ENCODE measurements at regions of chr2 and their contacts with region 1.

Region 1: GRCh38 chr2:197107221-197108041 is 180.9 kb upstream of the PGAP1 start:
- DNase-seq: peak; percentile 41 to 79
- H3K4me3 ChIP-seq: no peak overlapping the region
- H3K27ac ChIP-seq: peak overlapping the region; percentile 29
- H3K4me1 ChIP-seq: peaks cover 16% of the 10 kb centered on the region
- H3K27me3 ChIP-seq: no peaks in the 10 kb centered on the region
- CTCF ChIP-seq: no peak

Region 2: GRCh38 chr2:197322724-197323720 is 215.6 kb after region 1 on chr2:
- CTCF ChIA-PET with region 1: interaction called, 10 read pairs
- POLR2A ChIA-PET with region 1: no interaction called
- intact Hi-C with region 1: no loop called
- DNase-seq: no peak
- H3K4me3 ChIP-seq: no peak overlapping the region
- H3K27ac ChIP-seq: no peak overlapping the region
- H3K4me1 ChIP-seq: no peaks in the 10 kb centered on the region
- H3K27me3 ChIP-seq: no peaks in the 10 kb centered on the region; the same call in 1 of the 2 replicates
- CTCF ChIP-seq: no peak

Measured in PC-9 (cell line).